ENCODE measurements at regions of chr12 and their contacts with region 1.

Region 1: GRCh38 chr12:751192-751998 is 984 bp upstream of the WNK1 start:
- DNase-seq: peak; percentile 99
- H3K4me3 ChIP-seq: peak overlapping the region; percentile 87
- H3K27ac ChIP-seq: peak overlapping the region; percentile 90
- H3K4me1 ChIP-seq: peaks cover 39% of the 10 kb centered on the region
- CTCF ChIP-seq: peak; percentile 88

Region 2: DNA sequence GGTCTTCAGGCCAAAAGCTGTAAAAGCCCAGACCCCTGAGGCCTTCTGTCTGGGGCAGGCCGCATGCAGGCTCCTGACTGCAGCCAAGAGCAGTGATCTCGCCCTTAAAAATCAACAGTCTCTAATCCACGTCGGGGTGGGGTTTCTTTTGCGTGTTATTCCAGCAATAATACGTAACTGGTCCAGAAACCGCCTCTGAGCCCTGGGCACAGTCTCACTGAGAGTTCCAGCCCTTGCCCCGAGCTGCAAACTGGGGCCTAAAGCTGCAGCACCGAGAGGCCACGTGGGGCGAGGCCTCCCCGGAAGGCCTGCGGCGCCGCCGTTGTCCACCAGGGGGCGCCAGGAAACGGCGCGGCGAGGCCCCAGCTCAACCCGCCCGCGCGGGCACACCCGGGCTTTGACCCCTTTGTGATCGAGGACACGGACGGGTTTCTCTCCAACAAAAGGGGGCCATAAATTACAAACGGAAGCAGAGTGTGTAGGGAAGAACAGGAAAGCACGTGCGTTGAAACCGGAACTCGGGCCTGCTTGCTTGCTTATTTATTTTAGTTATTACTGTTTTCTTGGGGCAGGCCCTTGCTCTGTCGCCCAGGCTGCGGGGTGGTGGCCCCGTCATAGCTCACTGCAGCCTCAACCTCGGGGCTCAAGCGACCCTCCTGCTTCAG is 175.3 kb before region 1 on chr12:
- CTCF ChIA-PET with region 1: interaction called, 9 read pairs
- POLR2A ChIA-PET with region 1: interaction called, 14 read pairs
- intact Hi-C with region 1: loop called (anchors 1 kb)
- DNase-seq: peak; percentile 87
- H3K4me3 ChIP-seq: no peak overlapping the region
- H3K27ac ChIP-seq: no peak overlapping the region
- H3K4me1 ChIP-seq: peaks cover 13% of the 10 kb centered on the region
- CTCF ChIP-seq: peak; percentile 98

Region 3: GRCh38 chr12:662566-663292 is 88.7 kb before region 1 on chr12:
- CTCF ChIA-PET with region 1: interaction called, 5 read pairs
- POLR2A ChIA-PET with region 1: interaction called, 16 read pairs
- intact Hi-C with region 1: no loop called
- DNase-seq: no peak
- H3K4me3 ChIP-seq: peak overlapping the region; percentile 21
- H3K27ac ChIP-seq: peak overlapping the region; percentile 46
- H3K4me1 ChIP-seq: peaks cover 90% of the 10 kb centered on the region
- CTCF ChIP-seq: no peak

Region 4: DNA sequence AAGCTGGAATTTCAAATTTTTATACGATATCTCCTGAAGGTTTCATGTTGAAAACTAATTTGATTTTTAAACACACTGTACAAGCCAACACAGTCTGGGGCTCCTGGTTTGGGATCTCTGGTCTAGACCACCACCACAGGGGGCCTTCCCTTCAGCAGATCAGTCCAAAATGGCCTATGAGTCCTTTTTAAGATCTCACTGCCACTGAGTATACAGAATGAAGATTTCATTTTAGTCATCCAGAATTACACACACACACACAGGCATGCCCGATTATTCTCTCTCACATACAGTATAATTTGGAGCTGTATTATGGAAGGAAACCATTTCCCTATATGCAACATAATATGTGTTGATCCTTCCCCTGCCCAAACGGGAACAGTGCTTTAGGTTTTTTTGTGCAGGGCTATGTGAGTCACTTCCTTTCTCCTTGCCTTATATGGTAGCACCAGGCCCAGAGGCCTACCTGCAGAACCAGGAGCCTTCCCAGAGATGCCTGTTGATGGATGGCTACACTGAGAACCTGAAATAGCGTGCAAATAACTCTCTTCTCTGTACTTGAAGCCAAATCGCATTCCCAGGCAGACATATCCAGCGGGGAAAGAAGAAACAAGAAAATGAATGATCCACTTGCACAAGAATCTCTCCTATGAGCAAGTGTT is 27.1 kb before region 1 on chr12:
- CTCF ChIA-PET with region 1: no interaction called
- POLR2A ChIA-PET with region 1: interaction called, 17 read pairs
- intact Hi-C with region 1: loop called (anchors 2 kb)
- DNase-seq: no peak
- H3K4me3 ChIP-seq: no peak overlapping the region
- H3K27ac ChIP-seq: no peak overlapping the region
- H3K4me1 ChIP-seq: peaks cover 27% of the 10 kb centered on the region
- CTCF ChIP-seq: no peak

Region 5: DNA sequence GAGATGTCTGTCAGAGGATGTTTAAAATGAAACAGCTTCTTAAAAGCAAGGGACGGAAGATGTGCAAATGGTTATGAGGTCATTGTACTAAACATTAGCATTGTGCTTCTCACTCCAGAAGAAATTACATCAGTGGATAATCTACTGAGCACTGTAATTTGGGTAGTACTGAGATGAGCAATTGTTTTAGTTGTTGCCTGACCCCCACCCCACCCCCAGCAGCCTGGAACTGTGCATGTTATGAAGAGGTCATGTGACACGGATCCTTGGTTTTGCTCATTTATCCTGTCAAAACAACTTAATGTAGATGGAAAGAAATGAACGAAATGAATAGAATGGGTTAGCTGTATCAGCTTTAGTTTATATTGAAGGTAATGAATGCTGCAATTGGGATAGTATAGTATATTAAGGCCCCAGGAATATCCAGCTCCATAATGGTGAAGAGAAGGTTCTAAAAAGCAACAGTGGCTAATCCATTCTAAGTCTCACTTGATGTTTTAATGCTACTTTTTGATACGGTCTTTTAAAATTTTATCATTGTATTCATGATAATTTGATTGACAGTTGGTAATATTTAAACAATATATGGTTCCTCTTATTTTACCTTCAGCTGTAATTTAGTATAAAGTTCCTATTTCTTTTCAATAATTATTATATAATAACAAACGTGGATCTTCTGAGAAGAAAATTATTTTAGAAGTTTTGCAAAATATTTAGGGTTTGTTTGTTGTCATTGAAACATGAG is 59.4 kb after region 1 on chr12:
- CTCF ChIA-PET with region 1: interaction called, 3 read pairs
- POLR2A ChIA-PET with region 1: interaction called, 4 read pairs
- intact Hi-C with region 1: loop called (anchors 2 kb)
- DNase-seq: no peak
- H3K4me3 ChIP-seq: no peak overlapping the region
- H3K27ac ChIP-seq: no peak overlapping the region
- H3K4me1 ChIP-seq: peaks cover 38% of the 10 kb centered on the region
- CTCF ChIP-seq: no peak

Region 6: GRCh38 chr12:916712-917445 is 165.5 kb after region 1 on chr12:
- CTCF ChIA-PET with region 1: no interaction called
- POLR2A ChIA-PET with region 1: no interaction called
- intact Hi-C with region 1: no loop called
- DNase-seq: no peak
- H3K4me3 ChIP-seq: no peak overlapping the region
- H3K27ac ChIP-seq: no peak overlapping the region
- H3K4me1 ChIP-seq: peaks cover 8% of the 10 kb centered on the region
- CTCF ChIP-seq: no peak

Region 7: DNA sequence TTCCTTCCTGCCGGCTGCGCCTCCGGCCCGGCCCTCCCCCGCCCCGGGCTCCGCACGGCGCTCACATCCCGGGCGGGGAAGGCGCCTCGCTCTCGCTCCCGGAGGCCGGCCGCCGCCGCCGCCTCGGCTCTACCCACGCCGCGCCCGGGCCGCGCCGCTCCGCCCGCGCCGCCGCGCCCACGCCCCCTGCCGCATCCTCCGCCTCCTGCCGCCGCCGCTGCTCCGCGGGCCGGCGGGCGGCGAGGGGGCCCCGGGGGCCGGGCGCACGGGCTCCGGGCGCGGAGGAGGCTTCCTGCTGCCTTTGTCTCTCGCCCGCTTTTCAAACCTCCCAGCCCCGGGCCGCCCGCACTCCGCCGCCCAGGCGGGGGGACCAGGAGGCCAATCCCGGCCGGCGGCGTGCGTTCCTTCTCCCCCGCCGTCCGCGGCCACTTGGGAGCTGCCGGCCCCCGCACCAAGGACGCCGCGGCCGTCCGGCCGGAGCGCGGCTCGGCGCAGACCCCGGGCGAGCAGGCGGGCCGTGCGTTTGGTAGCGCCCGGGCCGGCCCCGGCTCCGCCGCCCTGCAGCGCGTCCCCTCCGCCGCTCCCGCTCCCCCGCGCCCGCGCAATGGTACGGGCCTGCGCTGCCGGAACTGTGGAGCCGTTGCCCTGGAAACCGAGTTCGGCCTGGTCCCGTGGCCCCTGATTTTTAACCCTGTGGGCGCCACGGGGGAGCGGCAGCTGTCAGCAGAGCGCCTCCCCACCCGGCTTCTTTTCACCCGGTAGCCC is 843.0 kb after region 1 on chr12 and contains the start of gene FBXL14:
- CTCF ChIA-PET with region 1: no interaction called
- POLR2A ChIA-PET with region 1: no interaction called
- intact Hi-C with region 1: loop called (anchors 10 kb)
- DNase-seq: peak; percentile 97
- H3K4me3 ChIP-seq: peak within 1 kb of the TSS; percentile 86
- H3K27ac ChIP-seq: peak within 1 kb of the TSS; percentile 80
- H3K4me1 ChIP-seq: peaks cover 38% of the 10 kb centered on the region
- CTCF ChIP-seq: no peak
- total RNA-seq, gene FBXL14: 45.5 and 46.2 TPM in 2 replicates